K562 (cell line): ENCODE measurements at regions of chr3 and their contacts with region 1.

Region 1: GRCh38 chr3:33074217-33075067 is 22.5 kb downstream of the GLB1 start:
- DNase-seq: peak; percentile 89 to 93 (median 91)
- ATAC-seq: peak; percentile 93
- H3K4me3 ChIP-seq: no peak overlapping the region
- H3K27ac ChIP-seq: no peak overlapping the region
- H3K4me1 ChIP-seq: peaks cover 0 to 17% of the 10 kb centered on the region in 2 experiments; a peak in 4 of 5 replicates
- H3K27me3 ChIP-seq: no peaks in the 10 kb centered on the region
- CTCF ChIP-seq: peak; percentile 92 to 97 (median 96)
- EP300 ChIP-seq: no peak
- POLR2A ChIP-seq: no peak
- RAD21 ChIP-seq: peak; percentile 82 to 95

Region 2: GRCh38 chr3:32960404-32961170 is 113.9 kb before region 1 on chr3:
- CTCF ChIA-PET with region 1: no interaction called
- POLR2A ChIA-PET with region 1: no interaction called
- in situ Hi-C with region 1: no loop called
- intact Hi-C with region 1: no loop called
- DNase-seq: no peak
- ATAC-seq: peak; percentile 34; the same call in 1 of the 3 replicates
- H3K4me3 ChIP-seq: no peak overlapping the region
- H3K27ac ChIP-seq: no peak overlapping the region
- H3K4me1 ChIP-seq: no peaks in the 10 kb centered on the region; a peak in 2 of 5 replicates
- H3K27me3 ChIP-seq: no peaks in the 10 kb centered on the region
- CTCF ChIP-seq: no peak
- EP300 ChIP-seq: no peak
- POLR2A ChIP-seq: no peak
- RAD21 ChIP-seq: no peak

Region 3: GRCh38 chr3:33061782-33062181 is 12.7 kb before region 1 on chr3:
- CTCF ChIA-PET with region 1: interaction called, 3 read pairs
- POLR2A ChIA-PET with region 1: interaction called, 10 read pairs
- in situ Hi-C with region 1: no loop called
- intact Hi-C with region 1: no loop called
- DNase-seq: no peak
- ATAC-seq: no peak
- H3K4me3 ChIP-seq: no peak overlapping the region
- H3K27ac ChIP-seq: no peak overlapping the region
- H3K4me1 ChIP-seq: peaks cover 1 to 2% of the 10 kb centered on the region in 2 experiments; a peak in 1 of 5 replicates
- H3K27me3 ChIP-seq: no peaks in the 10 kb centered on the region
- CTCF ChIP-seq: no peak
- EP300 ChIP-seq: no peak
- POLR2A ChIP-seq: no peak
- RAD21 ChIP-seq: no peak